ENCODE measurements at regions of chr19 and their contacts with region 1.

Region 1: GRCh38 chr19:14198384-14199376 is 7.3 kb downstream of the ADGRL1 start:
- DNase-seq: no peak
- CTCF ChIP-seq: no peak

Region 2: GRCh38 chr19:14081325-14082093 is 117.2 kb before region 1 on chr19:
- in situ Hi-C with region 1: no loop called
- DNase-seq: peak; percentile 98
- CTCF ChIP-seq: no peak

Region 3: GRCh38 chr19:14347999-14348889 is 149.6 kb after region 1 on chr19:
- in situ Hi-C with region 1: loop called (anchors 10 kb)
- DNase-seq: peak; percentile 91
- CTCF ChIP-seq: peak; percentile 89

Region 4: GRCh38 chr19:14496028-14496833 is 297.6 kb after region 1 on chr19 and contains the start of gene GIPC1:
- in situ Hi-C with region 1: loop called (anchors 25 kb)
- DNase-seq: peak; percentile 99
- CTCF ChIP-seq: no peak